HCT116 (cell line): ENCODE measurements at regions of chr7 and their contacts with region 1.

Region 1: GRCh38 chr7:155951554-155952158 is 139.4 kb upstream of the SHH start:
- DNase-seq: peak; percentile 96
- ATAC-seq: peak; percentile 86
- H3K4me3 ChIP-seq: peak overlapping the region; percentile 7 to 46; a peak in 3 of 4 replicates
- H3K27ac ChIP-seq: peak overlapping the region; percentile 94
- H3K4me1 ChIP-seq: peaks cover 42 to 74% of the 10 kb centered on the region in 2 experiments
- H3K27me3 ChIP-seq: no peaks in the 10 kb centered on the region
- CTCF ChIP-seq: no peak
- POLR2A ChIP-seq: no peak
- RAD21 ChIP-seq: no peak

Region 2: DNA sequence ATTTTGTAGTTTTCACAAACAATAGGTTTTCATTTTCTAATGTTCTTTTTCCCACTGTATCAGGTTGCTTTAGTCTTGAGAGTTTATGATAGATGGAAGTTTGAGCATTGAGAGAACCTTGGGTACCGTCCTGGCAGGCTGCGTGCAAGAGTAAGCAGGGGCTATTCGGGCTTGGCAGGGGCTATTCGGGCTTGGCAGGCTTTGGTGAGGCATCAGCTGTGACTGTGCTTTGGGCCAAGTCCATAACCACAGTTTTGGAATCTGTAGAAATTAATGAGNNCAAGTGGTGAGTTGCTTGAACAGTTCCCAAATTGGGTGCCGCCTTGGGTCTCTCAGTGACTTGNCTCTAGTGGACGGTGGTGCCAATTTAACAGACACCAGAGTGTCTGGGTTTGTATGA is 1373.3 kb before region 1 on chr7:
- CTCF ChIA-PET with region 1: no interaction called
- POLR2A ChIA-PET with region 1: no interaction called
- RAD21 ChIA-PET with region 1: no interaction called
- intact Hi-C with region 1: no loop called
- DNase-seq: no peak
- ATAC-seq: no peak
- H3K4me3 ChIP-seq: no peak overlapping the region
- H3K27ac ChIP-seq: no peak overlapping the region
- H3K4me1 ChIP-seq: no peaks in the 10 kb centered on the region
- H3K27me3 ChIP-seq: no peaks in the 10 kb centered on the region
- CTCF ChIP-seq: no peak
- POLR2A ChIP-seq: no peak
- RAD21 ChIP-seq: no peak

Region 3: GRCh38 chr7:155824227-155824886 is 127.3 kb before region 1 on chr7:
- CTCF ChIA-PET with region 1: no interaction called
- POLR2A ChIA-PET with region 1: no interaction called
- RAD21 ChIA-PET with region 1: no interaction called
- intact Hi-C with region 1: no loop called
- DNase-seq: no peak
- ATAC-seq: no peak
- H3K4me3 ChIP-seq: no peak overlapping the region
- H3K27ac ChIP-seq: no peak overlapping the region
- H3K4me1 ChIP-seq: peaks cover 3 to 17% of the 10 kb centered on the region in 2 experiments; a peak in 2 of 4 replicates
- H3K27me3 ChIP-seq: no peaks in the 10 kb centered on the region
- CTCF ChIP-seq: no peak
- POLR2A ChIP-seq: no peak
- RAD21 ChIP-seq: no peak

Region 4: GRCh38 chr7:155921804-155922721 is 29.6 kb before region 1 on chr7:
- CTCF ChIA-PET with region 1: interaction called, 4 read pairs
- POLR2A ChIA-PET with region 1: interaction called, 3 read pairs
- RAD21 ChIA-PET with region 1: interaction called in 1 of 2 experiments, 3 read pairs
- intact Hi-C with region 1: loop called (anchors 1 kb)
- DNase-seq: peak; percentile 77
- ATAC-seq: peak; percentile 87
- H3K4me3 ChIP-seq: peak overlapping the region in 1 of 2 experiments; percentile 10; a peak in 2 of 4 replicates
- H3K27ac ChIP-seq: peak overlapping the region; percentile 60
- H3K4me1 ChIP-seq: peaks cover 35 to 46% of the 10 kb centered on the region in 2 experiments
- H3K27me3 ChIP-seq: no peaks in the 10 kb centered on the region
- CTCF ChIP-seq: no peak
- POLR2A ChIP-seq: no peak
- RAD21 ChIP-seq: peak; percentile 42; the same call in 1 of the 2 replicates